B cell (primary cell): ENCODE measurements at regions of chr11 and their contacts with region 1.

Region 1: GRCh38 chr11:103055221-103055890 is 36.6 kb downstream of the DCUN1D5 start:
- DNase-seq: peak; percentile 25
- ATAC-seq: peak; percentile 33
- H3K4me3 ChIP-seq: no peak overlapping the region
- H3K4me3 Mint-ChIP-seq: no peak overlapping the region
- H3K27ac ChIP-seq: no peak overlapping the region
- H3K27ac Mint-ChIP-seq: no peak overlapping the region
- H3K4me1 ChIP-seq: no peaks in the 10 kb centered on the region
- H3K4me1 Mint-ChIP-seq: no peaks in the 10 kb centered on the region
- H3K27me3 ChIP-seq: no peaks in the 10 kb centered on the region
- H3K27me3 Mint-ChIP-seq: no peaks in the 10 kb centered on the region
- CTCF ChIP-seq: peak; percentile 77

Region 2: GRCh38 chr11:103035791-103036434 is 19.4 kb before region 1 on chr11:
- CTCF ChIA-PET with region 1: interaction called, 7 read pairs
- POLR2A ChIA-PET with region 1: no interaction called
- intact Hi-C with region 1: loop called (anchors 1 kb)
- DNase-seq: peak; percentile 67
- ATAC-seq: peak; percentile 88
- H3K4me3 ChIP-seq: no peak overlapping the region
- H3K4me3 Mint-ChIP-seq: no peak overlapping the region
- H3K27ac ChIP-seq: no peak overlapping the region
- H3K27ac Mint-ChIP-seq: peak overlapping the region; percentile 23
- H3K4me1 ChIP-seq: peaks cover 0 to 3% of the 10 kb centered on the region in 2 donors
- H3K4me1 Mint-ChIP-seq: peaks cover 5% of the 10 kb centered on the region
- H3K27me3 ChIP-seq: no peaks in the 10 kb centered on the region
- H3K27me3 Mint-ChIP-seq: no peaks in the 10 kb centered on the region
- CTCF ChIP-seq: peak; percentile 79